Activated T-helper 2 cell treated with anti-CD3 and anti-CD28 coated beads, Interferon-gamma antibody, Interleukin-2, Interleukin-4, amounts not matched to agents 10 μg/mL and 5 μg/mL and 100 μg/mL, durations not matched to agents 14 hours and 24 hours and 36 hours (primary cell): ENCODE measurements at regions of chr10 and their contacts with region 1.

Region 1: GRCh38 chr10:80253266-80254245 is 35.9 kb downstream of the MAT1A start:
- DNase-seq: no peak
- H3K4me3 Mint-ChIP-seq: peak overlapping the region; percentile 49
- H3K27ac Mint-ChIP-seq: peak overlapping the region; percentile 75
- H3K4me1 Mint-ChIP-seq: peaks cover 18% of the 10 kb centered on the region
- H3K27me3 Mint-ChIP-seq: peaks cover 2% of the 10 kb centered on the region

Region 2: GRCh38 chr10:79502561-79503309 is 750.8 kb before region 1 on chr10:
- intact Hi-C with region 1: loop called (anchors 10 kb)
- DNase-seq: no peak
- H3K4me3 Mint-ChIP-seq: no peak overlapping the region
- H3K27ac Mint-ChIP-seq: no peak overlapping the region
- H3K4me1 Mint-ChIP-seq: peaks cover 11% of the 10 kb centered on the region
- H3K27me3 Mint-ChIP-seq: peaks cover 37% of the 10 kb centered on the region

Region 3: GRCh38 chr10:80498833-80499741 is 245.5 kb after region 1 on chr10:
- intact Hi-C with region 1: no loop called
- DNase-seq: peak; percentile 24
- H3K4me3 Mint-ChIP-seq: peak overlapping the region; percentile 55
- H3K27ac Mint-ChIP-seq: peak overlapping the region; percentile 90
- H3K4me1 Mint-ChIP-seq: peaks cover 83% of the 10 kb centered on the region
- H3K27me3 Mint-ChIP-seq: no peaks in the 10 kb centered on the region